ENCODE measurements at regions of chrX and their contacts with region 1.

Region 1: GRCh38 chrX:154040307-154040756 is 20.6 kb upstream of the IRAK1 start:
- DNase-seq: peak; percentile 89
- H3K4me3 ChIP-seq: no peak overlapping the region
- H3K27me3 ChIP-seq: no peaks in the 10 kb centered on the region
- CTCF ChIP-seq: 0 out of 2 replicates have a peak, but pooled peaks have one; percentile 4

Region 2: DNA sequence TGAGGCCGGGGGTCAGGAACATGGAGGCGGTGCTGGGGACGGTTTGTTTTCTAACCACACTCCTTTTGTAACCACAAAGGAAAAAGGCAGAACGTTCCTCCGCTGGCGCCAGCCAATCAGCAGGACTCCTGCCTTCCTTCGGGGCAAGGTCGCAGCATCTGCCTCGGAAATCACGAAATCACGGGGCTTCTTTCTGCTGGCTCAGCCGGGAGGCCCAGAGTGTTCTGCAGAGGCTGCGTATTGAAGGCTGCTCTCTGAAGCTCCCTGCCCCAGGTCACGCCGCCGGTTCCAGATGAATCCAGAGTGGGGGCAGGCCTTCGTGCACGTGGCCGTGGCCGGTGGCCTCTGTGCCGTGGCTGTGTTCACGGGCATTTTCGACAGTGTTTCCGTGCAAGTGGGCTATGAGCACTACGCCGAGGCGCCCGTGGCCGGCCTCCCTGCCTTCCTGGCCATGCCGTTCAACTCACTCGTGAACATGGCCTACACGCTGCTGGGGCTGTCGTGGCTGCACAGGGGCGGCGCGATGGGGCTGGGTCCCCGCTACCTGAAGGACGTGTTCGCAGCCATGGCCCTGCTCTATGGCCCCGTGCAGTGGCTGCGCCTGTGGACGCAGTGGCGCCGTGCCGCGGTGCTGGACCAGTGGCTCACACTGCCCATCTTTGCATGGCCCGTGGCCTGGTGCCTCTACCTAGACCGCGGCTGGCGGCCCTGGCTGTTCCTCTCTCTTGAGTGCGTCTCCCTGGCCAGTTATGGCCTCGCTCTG is 58.4 kb before region 1 on chrX:
- CTCF ChIA-PET with region 1: no interaction called
- POLR2A ChIA-PET with region 1: interaction called, 11 read pairs
- DNase-seq: no peak
- H3K4me3 ChIP-seq: no peak overlapping the region
- H3K27me3 ChIP-seq: no peaks in the 10 kb centered on the region
- CTCF ChIP-seq: no peak

Measured in BJ (cell line).